Prostate gland (tissue), 2 donors: ENCODE measurements at regions of chr17 and their contacts with region 1.

Region 1: GRCh38 chr17:59331129-59331928 is at the start of gene YPEL2:
- DNase-seq: peak; percentile 98
- H3K4me3 ChIP-seq: peak within 1 kb of the TSS; percentile 95 to 98
- H3K27ac ChIP-seq: peak within 1 kb of the TSS; percentile 88 to 91
- H3K4me1 ChIP-seq: peaks cover 8% of the 10 kb centered on the region
- H3K27me3 ChIP-seq: no peaks in the 10 kb centered on the region
- CTCF ChIP-seq: no peak
- POLR2A ChIP-seq: peak; percentile 90
- total RNA-seq, gene YPEL2: 12.8 to 40.3 TPM

Region 2: GRCh38 chr17:59366773-59367657 is 35.7 kb after region 1 on chr17:
- intact Hi-C with region 1: loop called (anchors 5 kb)
- DNase-seq: peak; percentile 84
- H3K4me3 ChIP-seq: no peak overlapping the region
- H3K27ac ChIP-seq: peak overlapping the region; percentile 79 to 83
- H3K4me1 ChIP-seq: peaks cover 59% of the 10 kb centered on the region
- H3K27me3 ChIP-seq: no peaks in the 10 kb centered on the region
- CTCF ChIP-seq: no peak
- POLR2A ChIP-seq: no peak

Region 3: GRCh38 chr17:59440784-59441441 is 109.6 kb after region 1 on chr17:
- intact Hi-C with region 1: loop called (anchors 1 kb)
- DNase-seq: peak; percentile 92
- H3K4me3 ChIP-seq: no peak overlapping the region
- H3K27ac ChIP-seq: peak overlapping the region in 1 of 2 donors; percentile 35
- H3K4me1 ChIP-seq: no peaks in the 10 kb centered on the region
- H3K27me3 ChIP-seq: no peaks in the 10 kb centered on the region
- CTCF ChIP-seq: peak; percentile 46 to 92 (median 89)
- POLR2A ChIP-seq: no peak

Region 4: GRCh38 chr17:59837308-59838051 is 506.2 kb after region 1 on chr17:
- intact Hi-C with region 1: loop called (anchors 5 kb)
- DNase-seq: peak; percentile 92
- H3K4me3 ChIP-seq: peak overlapping the region; percentile 46 to 67
- H3K27ac ChIP-seq: peak overlapping the region; percentile 96 to 99
- H3K4me1 ChIP-seq: no peaks in the 10 kb centered on the region
- H3K27me3 ChIP-seq: no peaks in the 10 kb centered on the region
- CTCF ChIP-seq: peak in 2 of 4 experiments; percentile 6 to 26
- POLR2A ChIP-seq: peak; percentile 82